A673 (cell line): ENCODE measurements at regions of chr14 and their contacts with region 1.

Region 1: GRCh38 chr14:23910101-23910875 is 43.3 kb upstream of the DHRS4 start:
- DNase-seq: peak; percentile 74
- H3K4me3 ChIP-seq: no peak overlapping the region
- H3K27ac ChIP-seq: no peak overlapping the region
- H3K4me1 ChIP-seq: no peaks in the 10 kb centered on the region
- H3K27me3 ChIP-seq: peaks cover 10% of the 10 kb centered on the region
- CTCF ChIP-seq: peak; percentile 72

Region 2: GRCh38 chr14:23588884-23589598 is 321.2 kb before region 1 on chr14:
- CTCF ChIA-PET with region 1: interaction called, 9 read pairs
- POLR2A ChIA-PET with region 1: no interaction called
- intact Hi-C with region 1: loop called (anchors 2 kb)
- DNase-seq: peak; percentile 89
- H3K4me3 ChIP-seq: no peak overlapping the region
- H3K27ac ChIP-seq: no peak overlapping the region
- H3K4me1 ChIP-seq: peaks cover 7% of the 10 kb centered on the region
- H3K27me3 ChIP-seq: no peaks in the 10 kb centered on the region
- CTCF ChIP-seq: peak; percentile 79

Region 3: DNA sequence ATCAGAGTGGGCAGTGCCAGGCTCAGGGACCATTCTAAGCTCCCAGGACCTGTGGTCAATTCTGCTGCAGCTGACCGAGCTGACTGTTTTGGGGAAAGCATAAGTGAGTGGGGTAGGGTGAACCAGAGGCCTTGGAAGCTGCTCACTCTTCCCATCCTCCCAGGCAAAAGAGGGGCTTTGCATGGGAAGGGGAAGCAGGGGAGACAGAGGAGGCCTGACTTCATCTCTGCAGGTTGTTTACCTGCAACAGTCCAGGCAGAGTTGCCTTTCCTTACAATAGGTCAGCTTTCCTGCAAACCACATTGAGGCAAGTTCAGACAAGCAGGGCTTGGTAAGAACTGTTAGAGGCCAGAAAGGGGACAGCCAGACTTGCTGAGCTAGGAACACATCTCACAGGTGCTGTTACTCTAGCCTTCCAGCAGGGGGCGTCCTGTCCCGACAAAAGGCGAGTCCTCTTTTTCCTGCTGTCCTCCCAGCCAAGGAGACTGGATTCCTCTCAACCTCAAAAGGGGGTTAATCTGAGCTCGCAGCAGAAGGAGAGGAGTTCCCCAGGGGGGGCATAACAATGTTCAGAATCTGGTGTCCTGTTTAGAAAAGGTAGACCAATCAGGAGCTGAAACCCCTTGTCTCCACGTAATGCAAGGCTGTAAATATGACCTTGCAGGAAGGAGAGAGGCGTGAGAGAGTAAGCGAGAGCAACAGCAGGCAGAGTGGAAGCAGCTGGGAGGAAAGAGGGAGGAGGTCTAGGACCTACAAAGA is 278.4 kb before region 1 on chr14:
- CTCF ChIA-PET with region 1: interaction called, 28 read pairs
- POLR2A ChIA-PET with region 1: interaction called, 3 read pairs
- intact Hi-C with region 1: no loop called
- DNase-seq: peak; percentile 85
- H3K4me3 ChIP-seq: no peak overlapping the region
- H3K27ac ChIP-seq: no peak overlapping the region
- H3K4me1 ChIP-seq: no peaks in the 10 kb centered on the region
- H3K27me3 ChIP-seq: no peaks in the 10 kb centered on the region
- CTCF ChIP-seq: peak; percentile 95

Region 4: DNA sequence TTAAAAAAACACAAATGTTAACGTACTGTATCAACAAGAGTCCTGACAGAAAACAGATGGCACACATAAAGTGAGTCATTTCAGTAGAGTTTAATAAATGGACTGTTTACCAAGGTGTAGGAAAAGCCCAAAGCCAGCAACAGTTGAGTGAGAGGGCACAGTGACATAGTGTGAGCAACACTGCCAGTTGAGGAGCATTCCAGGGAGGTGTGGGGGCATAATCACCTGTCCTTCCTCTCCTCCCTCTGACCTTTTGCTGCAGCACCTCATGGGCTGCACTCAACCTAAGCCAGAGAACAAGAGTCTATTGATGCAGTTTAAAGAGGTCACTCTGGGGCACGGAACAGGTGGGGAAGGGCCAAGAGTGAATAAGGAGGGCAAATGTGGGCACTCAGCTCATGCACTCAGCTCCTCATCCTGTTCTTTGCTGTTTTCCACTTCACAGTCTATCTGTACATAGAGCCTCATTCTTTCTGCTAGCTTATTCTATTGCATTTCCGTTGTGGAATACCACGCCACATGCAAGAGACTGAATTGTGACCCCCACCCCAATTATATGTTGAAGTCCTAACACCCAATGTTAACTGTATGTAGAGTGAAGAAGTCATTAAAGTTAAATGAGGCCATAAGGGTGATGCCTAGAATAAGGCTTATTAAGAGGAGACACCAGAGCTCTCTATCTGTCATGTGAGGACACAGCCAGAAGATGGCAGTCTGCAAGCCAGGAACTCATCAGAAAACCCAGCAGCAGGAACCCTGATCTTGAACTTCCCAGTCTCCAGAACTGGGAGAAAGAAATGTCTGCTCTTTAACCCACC is 244.7 kb before region 1 on chr14:
- CTCF ChIA-PET with region 1: interaction called, 14 read pairs
- POLR2A ChIA-PET with region 1: no interaction called
- intact Hi-C with region 1: no loop called
- DNase-seq: peak; percentile 59
- H3K4me3 ChIP-seq: no peak overlapping the region
- H3K27ac ChIP-seq: no peak overlapping the region
- H3K4me1 ChIP-seq: no peaks in the 10 kb centered on the region
- H3K27me3 ChIP-seq: peaks cover 10% of the 10 kb centered on the region
- CTCF ChIP-seq: peak; percentile 70

Region 5: DNA sequence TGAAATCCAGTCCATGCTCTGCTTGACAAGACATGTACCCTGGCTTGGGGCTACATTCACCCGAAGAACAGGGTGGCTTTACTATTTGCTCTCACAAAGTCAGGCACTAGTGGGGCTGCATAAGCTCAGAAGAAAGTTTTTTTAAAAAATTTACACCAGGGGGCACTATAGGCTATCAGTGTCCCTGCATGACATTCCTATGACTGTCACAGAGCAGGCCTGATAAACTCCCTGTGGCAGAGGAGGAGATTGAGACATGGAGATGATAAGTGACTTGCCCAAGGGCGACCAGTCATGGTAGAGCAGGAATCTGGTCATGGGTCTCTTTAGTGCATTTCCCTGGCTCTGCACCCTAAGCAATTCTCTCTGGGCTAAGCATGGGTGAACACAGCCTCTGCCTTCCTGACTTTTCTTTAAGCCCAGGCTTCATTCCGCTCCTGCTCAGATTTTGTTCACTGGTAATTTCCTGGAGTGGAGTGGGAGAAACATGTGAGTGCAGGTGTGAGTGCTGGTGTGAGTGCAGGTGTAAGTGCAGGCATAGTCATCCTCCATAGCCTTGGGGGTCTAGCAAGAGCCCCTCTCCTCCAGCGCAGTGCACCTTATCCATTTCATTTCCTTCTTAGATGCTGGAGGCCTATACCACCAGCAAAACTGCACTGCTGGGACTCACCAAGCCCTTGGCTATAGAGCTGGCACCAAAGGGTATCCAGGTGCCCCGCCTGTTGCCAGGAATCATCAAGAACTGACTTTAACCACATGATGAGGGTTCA is 182.5 kb before region 1 on chr14:
- CTCF ChIA-PET with region 1: interaction called, 24 read pairs
- POLR2A ChIA-PET with region 1: no interaction called
- intact Hi-C with region 1: loop called (anchors 1 kb)
- DNase-seq: peak; percentile 74
- H3K4me3 ChIP-seq: no peak overlapping the region
- H3K27ac ChIP-seq: no peak overlapping the region
- H3K4me1 ChIP-seq: no peaks in the 10 kb centered on the region
- H3K27me3 ChIP-seq: no peaks in the 10 kb centered on the region
- CTCF ChIP-seq: peak; percentile 60